Cardiac septum (tissue), 1 donor: ENCODE measurements at regions of chr2 and their contacts with region 1.

Region 1: GRCh38 chr2:216698895-216699294 is 3.5 kb upstream of the IGFBP5 start:
- DNase-seq: peak; percentile 15

Region 2: GRCh38 chr2:216777650-216778273 is 78.9 kb after region 1 on chr2:
- intact Hi-C with region 1: loop called (anchors 2 kb)
- DNase-seq: no peak

Region 3: DNA sequence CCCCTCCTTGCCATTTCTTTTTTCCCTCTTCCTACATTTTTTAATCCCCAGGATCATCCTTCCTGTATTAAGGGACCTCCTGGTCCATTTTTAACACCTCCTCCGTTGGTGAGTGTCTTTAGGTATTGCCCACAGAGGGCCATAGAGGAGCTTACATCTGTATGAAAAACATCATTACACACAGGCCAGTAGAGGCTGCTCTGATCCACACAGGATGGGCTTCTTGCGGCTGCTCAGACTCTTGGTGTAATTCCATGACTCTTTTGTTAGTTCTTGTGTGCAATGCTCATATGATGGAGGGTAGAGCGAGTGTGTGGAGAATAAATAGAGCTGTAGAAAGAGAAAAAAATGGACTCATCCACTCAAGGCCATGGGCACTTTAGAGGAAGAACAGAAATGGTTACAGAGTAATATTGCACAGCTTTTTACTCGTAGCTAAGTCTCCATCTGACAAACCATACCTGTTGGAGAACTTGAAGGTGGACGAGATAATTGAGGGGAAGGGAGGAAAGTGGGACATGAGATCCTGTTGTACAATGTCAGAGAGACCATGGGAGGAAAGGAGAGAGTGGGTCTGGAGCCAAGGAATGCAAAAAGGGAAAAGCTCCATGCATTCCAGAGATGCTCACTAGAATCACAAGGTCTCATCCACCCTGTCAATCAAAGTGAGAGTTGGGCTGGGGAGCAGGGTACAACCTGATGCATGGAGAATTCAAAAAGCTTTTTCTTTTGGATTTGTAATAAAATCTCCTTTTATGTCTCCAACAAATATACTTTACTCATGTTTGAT is 290.6 kb after region 1 on chr2:
- intact Hi-C with region 1: loop called (anchors 5 kb)
- DNase-seq: no peak

Region 4: DNA sequence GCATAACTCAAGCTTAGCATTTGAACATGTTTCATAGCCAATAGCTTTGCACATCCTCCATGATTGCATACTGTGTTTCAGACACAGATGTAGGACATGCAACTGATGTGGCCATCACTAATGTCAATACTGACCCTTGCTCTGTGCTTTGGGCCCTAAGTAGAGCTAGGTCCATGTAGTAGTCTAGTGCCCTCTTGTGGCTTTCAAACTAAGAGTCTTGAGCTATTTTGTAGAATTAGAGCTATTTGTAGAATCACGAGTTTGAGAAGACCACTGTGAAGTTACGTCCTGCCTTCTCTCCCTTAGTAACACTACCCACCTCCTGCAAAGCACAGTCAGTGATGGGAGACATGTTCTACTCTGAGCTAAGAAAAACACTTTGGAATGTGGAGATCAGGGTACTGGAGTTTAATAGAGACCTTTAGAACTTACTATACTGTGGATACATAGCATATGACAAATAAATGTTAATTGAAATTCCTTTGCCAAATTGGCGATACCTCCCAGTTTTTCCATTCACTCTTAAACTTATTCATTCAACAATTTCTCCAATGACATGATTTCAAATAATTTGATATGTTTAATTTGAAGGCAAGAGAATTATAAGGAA is 467.5 kb after region 1 on chr2:
- intact Hi-C with region 1: loop called (anchors 5 kb)
- DNase-seq: no peak

Region 5: GRCh38 chr2:217434181-217434975 is 735.5 kb after region 1 on chr2:
- intact Hi-C with region 1: loop called (anchors 5 kb)
- DNase-seq: peak; percentile 93

Region 6: DNA sequence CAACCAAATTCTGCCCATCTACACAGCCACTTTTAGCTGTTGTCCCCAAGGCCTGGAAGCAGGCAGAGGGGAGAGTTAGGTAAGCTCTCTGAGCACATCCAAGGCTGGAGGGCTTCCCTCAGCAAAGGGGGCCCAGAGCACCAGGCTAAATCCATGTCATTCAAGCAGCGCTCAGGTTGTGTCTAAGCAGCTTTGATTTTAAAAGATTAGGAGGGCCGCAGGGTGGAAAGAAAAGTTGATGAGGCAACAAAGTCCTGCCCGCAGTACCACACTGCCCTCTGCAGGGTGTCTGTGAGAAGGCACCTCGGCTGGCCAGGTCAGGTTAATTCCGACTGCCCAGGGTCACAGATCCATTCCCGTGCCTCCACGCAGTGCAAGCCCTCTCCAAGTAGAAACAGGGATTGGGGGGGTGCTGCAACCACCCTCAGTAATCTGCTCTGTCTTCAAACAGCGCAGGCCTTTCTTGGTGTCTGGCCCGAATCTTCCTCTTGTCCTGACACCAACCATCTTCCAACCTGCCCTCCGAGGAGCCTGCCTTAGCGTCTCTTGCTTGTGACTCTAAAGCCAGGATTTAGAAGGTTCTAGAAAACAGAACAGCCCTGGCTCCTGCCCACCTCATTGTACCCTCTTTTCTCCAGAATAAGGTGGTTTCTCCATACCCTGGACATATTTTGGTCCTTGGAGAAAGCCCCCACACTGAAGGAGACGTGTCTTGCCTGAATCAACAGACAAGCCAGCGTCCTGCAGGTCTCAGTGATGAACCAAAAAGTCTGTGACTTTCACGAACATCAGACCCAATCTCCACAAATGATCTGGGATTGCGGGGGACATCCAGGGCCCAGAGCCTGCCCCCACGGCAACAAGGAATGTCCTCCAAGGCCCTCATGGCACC is 1014.7 kb after region 1 on chr2:
- intact Hi-C with region 1: loop called (anchors 5 kb)
- DNase-seq: peak; percentile 83